Panc1 (cell line): ENCODE measurements at regions of chr5 and their contacts with region 1.

Region 1: DNA sequence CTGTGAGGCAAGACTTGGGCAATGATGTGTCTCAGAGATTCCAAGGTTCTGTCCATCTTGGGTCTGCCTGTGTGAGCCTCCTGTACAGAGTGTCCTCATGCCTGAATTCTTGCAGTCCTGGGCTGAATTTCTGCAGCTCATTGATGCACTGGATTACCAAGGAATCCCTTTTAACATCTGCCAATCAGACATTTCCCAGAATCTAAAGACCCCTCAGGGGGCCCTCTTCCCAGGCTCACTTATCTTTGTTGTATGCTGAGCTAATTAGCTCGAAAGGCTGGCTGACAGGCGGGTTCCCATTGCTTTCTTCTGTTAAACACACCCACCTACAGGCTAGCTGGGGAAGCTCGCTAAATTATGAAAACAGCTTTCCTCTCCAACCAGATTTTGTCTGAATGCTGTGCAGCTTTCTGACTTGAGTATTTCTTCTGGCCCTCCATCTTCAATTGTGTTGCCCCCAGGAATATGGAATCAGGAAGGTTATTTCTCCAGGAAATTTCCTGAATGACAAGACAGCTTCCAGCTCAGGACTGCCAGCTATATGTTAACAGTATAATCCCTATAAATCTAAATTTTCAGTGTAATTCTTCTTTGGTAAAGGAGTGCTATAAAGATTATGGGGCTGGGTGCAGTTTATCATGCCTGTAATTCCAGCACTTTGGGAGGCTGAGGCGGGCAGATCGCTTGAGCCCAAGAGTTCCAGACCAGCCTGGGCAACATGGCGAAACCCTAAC is at the start of gene LIX1:
- DNase-seq: no peak
- ATAC-seq: peak; percentile 94
- H3K4me3 ChIP-seq: no peak within 1 kb of the TSS
- H3K27ac ChIP-seq: no peak within 1 kb of the TSS
- H3K4me1 ChIP-seq: no peaks in the 10 kb centered on the region
- H3K27me3 ChIP-seq: peaks cover 8% of the 10 kb centered on the region
- CTCF ChIP-seq: peak; percentile 75
- total RNA-seq, gene LIX1: not detected

Region 2: GRCh38 chr5:96687812-96688453 is 454.8 kb before region 1 on chr5:
- CTCF ChIA-PET with region 1: no interaction called
- POLR2A ChIA-PET with region 1: no interaction called
- in situ Hi-C with region 1: no loop called
- intact Hi-C with region 1: no loop called
- DNase-seq: no peak
- ATAC-seq: peak; percentile 94
- H3K4me3 ChIP-seq: no peak overlapping the region
- H3K27ac ChIP-seq: no peak overlapping the region
- H3K4me1 ChIP-seq: no peaks in the 10 kb centered on the region
- H3K27me3 ChIP-seq: no peaks in the 10 kb centered on the region
- CTCF ChIP-seq: peak; percentile 66; the same call in 1 of the 2 replicates

Region 3: GRCh38 chr5:96868603-96869371 is 273.9 kb before region 1 on chr5:
- CTCF ChIA-PET with region 1: interaction called, 12 read pairs
- POLR2A ChIA-PET with region 1: no interaction called
- in situ Hi-C with region 1: no loop called
- intact Hi-C with region 1: no loop called
- DNase-seq: peak; percentile 79
- ATAC-seq: peak; percentile 93
- H3K4me3 ChIP-seq: no peak overlapping the region
- H3K27ac ChIP-seq: no peak overlapping the region
- H3K4me1 ChIP-seq: no peaks in the 10 kb centered on the region
- H3K27me3 ChIP-seq: peaks cover 7% of the 10 kb centered on the region; the same call in 1 of the 2 replicates
- CTCF ChIP-seq: peak; percentile 92

Region 4: GRCh38 chr5:96997265-96997859 is 145.3 kb before region 1 on chr5:
- CTCF ChIA-PET with region 1: interaction called, 8 read pairs
- POLR2A ChIA-PET with region 1: no interaction called
- in situ Hi-C with region 1: no loop called
- intact Hi-C with region 1: loop called (anchors 10 kb)
- DNase-seq: peak; percentile 20
- ATAC-seq: 0 out of 2 replicates have a peak, but pooled peaks have one; percentile 65
- H3K4me3 ChIP-seq: no peak overlapping the region
- H3K27ac ChIP-seq: no peak overlapping the region
- H3K4me1 ChIP-seq: no peaks in the 10 kb centered on the region
- H3K27me3 ChIP-seq: no peaks in the 10 kb centered on the region
- CTCF ChIP-seq: peak; percentile 53; the same call in 1 of the 2 replicates

Region 5: DNA sequence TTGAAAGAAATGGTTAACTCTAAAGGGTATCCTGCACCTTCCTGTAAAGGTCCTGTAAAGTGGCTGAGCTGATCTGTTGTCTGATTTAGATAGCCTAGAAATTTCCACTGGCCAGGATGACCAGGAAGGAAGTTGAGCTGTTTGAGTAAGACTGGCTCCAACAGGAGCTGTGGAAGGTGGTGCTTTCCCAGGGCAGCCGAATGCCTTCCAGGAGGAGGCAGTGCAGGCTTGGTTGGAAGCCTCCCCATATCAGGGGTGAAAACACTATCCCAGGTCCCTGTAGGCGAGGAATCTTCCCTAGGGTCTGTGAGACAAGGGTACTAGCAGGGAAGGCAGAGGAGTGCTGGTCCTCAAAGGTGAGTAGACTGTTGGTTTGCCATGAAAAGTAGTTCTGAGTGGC is 98.6 kb before region 1 on chr5:
- CTCF ChIA-PET with region 1: interaction called, 3 read pairs
- POLR2A ChIA-PET with region 1: no interaction called
- in situ Hi-C with region 1: no loop called
- intact Hi-C with region 1: loop called (anchors 10 kb)
- DNase-seq: peak; percentile 12
- ATAC-seq: peak; percentile 83
- H3K4me3 ChIP-seq: no peak overlapping the region
- H3K27ac ChIP-seq: no peak overlapping the region
- H3K4me1 ChIP-seq: no peaks in the 10 kb centered on the region
- H3K27me3 ChIP-seq: no peaks in the 10 kb centered on the region; the same call in 1 of the 2 replicates
- CTCF ChIP-seq: peak; percentile 45; the same call in 1 of the 2 replicates

Region 6: GRCh38 chr5:97157689-97158088 is 15.0 kb after region 1 on chr5:
- CTCF ChIA-PET with region 1: no interaction called
- POLR2A ChIA-PET with region 1: no interaction called
- in situ Hi-C with region 1: no loop called
- intact Hi-C with region 1: no loop called
- DNase-seq: no peak
- ATAC-seq: no peak
- H3K4me3 ChIP-seq: no peak overlapping the region
- H3K27ac ChIP-seq: no peak overlapping the region
- H3K4me1 ChIP-seq: no peaks in the 10 kb centered on the region
- H3K27me3 ChIP-seq: no peaks in the 10 kb centered on the region
- CTCF ChIP-seq: no peak